PC-3 (cell line): ENCODE measurements at regions of chr3 and their contacts with region 1.

Region 1: DNA sequence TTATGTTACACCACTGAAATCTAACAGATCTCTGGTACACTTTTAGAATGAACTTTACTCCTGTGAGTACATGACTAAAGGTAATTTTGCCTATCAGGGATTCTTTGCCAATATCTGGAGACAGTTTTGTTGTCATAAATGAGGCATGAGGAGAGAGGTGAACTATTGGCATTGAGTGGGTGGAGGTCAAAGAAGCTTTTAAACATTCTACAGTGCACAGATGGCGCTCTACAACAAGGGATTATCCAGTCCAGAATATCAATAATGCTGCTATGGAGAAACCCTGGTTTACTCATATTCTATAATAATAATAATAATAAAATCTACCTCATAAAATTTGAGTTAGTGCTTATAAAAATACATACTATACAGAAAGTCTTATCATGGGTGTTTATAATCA is 702.3 kb downstream of the SI start:
- DNase-seq: peak; percentile 16
- ATAC-seq: peak; percentile 67
- H3K4me3 ChIP-seq: no peak overlapping the region
- H3K27ac ChIP-seq: no peak overlapping the region
- H3K4me1 ChIP-seq: peaks cover 4% of the 10 kb centered on the region; the same call in 1 of the 2 replicates
- H3K27me3 ChIP-seq: no peaks in the 10 kb centered on the region
- CTCF ChIP-seq: peak; percentile 20; the same call in 1 of the 2 replicates

Region 2: GRCh38 chr3:164080208-164080607 is 295.8 kb before region 1 on chr3:
- CTCF ChIA-PET with region 1: no interaction called
- POLR2A ChIA-PET with region 1: no interaction called
- intact Hi-C with region 1: no loop called
- DNase-seq: no peak
- ATAC-seq: no peak
- H3K4me3 ChIP-seq: no peak overlapping the region
- H3K27ac ChIP-seq: no peak overlapping the region
- H3K4me1 ChIP-seq: no peaks in the 10 kb centered on the region
- H3K27me3 ChIP-seq: no peaks in the 10 kb centered on the region
- CTCF ChIP-seq: no peak

Region 3: GRCh38 chr3:164806187-164806586 is 430.2 kb after region 1 on chr3:
- CTCF ChIA-PET with region 1: no interaction called
- POLR2A ChIA-PET with region 1: no interaction called
- intact Hi-C with region 1: loop called (anchors 5 kb)
- DNase-seq: no peak
- ATAC-seq: peak; percentile 62; the same call in 1 of the 2 replicates
- H3K4me3 ChIP-seq: no peak overlapping the region
- H3K27ac ChIP-seq: no peak overlapping the region
- H3K4me1 ChIP-seq: no peaks in the 10 kb centered on the region
- H3K27me3 ChIP-seq: no peaks in the 10 kb centered on the region
- CTCF ChIP-seq: peak; percentile 33; the same call in 1 of the 2 replicates